CD8-positive, alpha-beta T cell (primary cell): ENCODE measurements at regions of chr2 and their contacts with region 1.

Region 1: GRCh38 chr2:156589381-156590079 is 153.4 kb downstream of the GPD2 start:
- DNase-seq: peak in 6 of 9 experiments; percentile 2 to 67 (median 20)
- ATAC-seq: peak; percentile 63
- H3K4me3 ChIP-seq: no peak overlapping the region
- H3K4me3 Mint-ChIP-seq: no peak overlapping the region
- H3K27ac ChIP-seq: no peak overlapping the region
- H3K27ac Mint-ChIP-seq: no peak overlapping the region
- H3K4me1 ChIP-seq: no peaks in the 10 kb centered on the region
- H3K4me1 Mint-ChIP-seq: peaks cover 2% of the 10 kb centered on the region
- H3K27me3 ChIP-seq: no peaks in the 10 kb centered on the region
- H3K27me3 Mint-ChIP-seq: no peaks in the 10 kb centered on the region
- CTCF ChIP-seq: peak; percentile 87

Region 2: DNA sequence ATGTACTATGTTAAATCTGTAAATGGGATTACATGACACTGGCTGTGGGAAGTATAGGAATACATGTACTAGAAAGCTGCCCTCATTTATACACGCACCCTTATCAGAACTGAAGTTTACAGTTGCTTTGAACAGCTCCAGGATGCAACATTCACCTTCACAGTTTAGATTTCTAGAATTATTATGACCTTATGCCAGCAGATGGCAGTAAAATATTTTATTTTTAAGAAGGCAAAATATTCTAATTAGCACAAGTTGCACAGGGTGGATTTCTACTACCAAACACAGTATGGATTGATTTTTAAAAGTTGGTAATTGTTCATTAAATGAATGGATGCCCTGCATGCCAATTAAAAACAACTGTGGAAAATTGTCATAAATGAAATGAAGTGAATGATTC is 1220.6 kb before region 1 on chr2:
- CTCF ChIA-PET with region 1: interaction called, 5 read pairs
- POLR2A ChIA-PET with region 1: no interaction called
- intact Hi-C with region 1: loop called (anchors 2 to 5 kb)
- DNase-seq: peak in 1 of 9 experiments; percentile 4
- ATAC-seq: no peak
- H3K4me3 ChIP-seq: no peak overlapping the region
- H3K4me3 Mint-ChIP-seq: no peak overlapping the region
- H3K27ac ChIP-seq: no peak overlapping the region
- H3K27ac Mint-ChIP-seq: no peak overlapping the region
- H3K4me1 ChIP-seq: no peaks in the 10 kb centered on the region
- H3K4me1 Mint-ChIP-seq: no peaks in the 10 kb centered on the region
- H3K27me3 ChIP-seq: no peaks in the 10 kb centered on the region
- H3K27me3 Mint-ChIP-seq: no peaks in the 10 kb centered on the region
- CTCF ChIP-seq: no peak

Region 3: GRCh38 chr2:156192468-156192867 is 397.1 kb before region 1 on chr2:
- CTCF ChIA-PET with region 1: interaction called, 12 read pairs
- POLR2A ChIA-PET with region 1: no interaction called
- intact Hi-C with region 1: loop called (anchors 1 to 5 kb)
- DNase-seq: peak in 2 of 9 experiments; percentile 17 to 36
- ATAC-seq: no peak
- H3K4me3 ChIP-seq: no peak overlapping the region
- H3K4me3 Mint-ChIP-seq: no peak overlapping the region
- H3K27ac ChIP-seq: no peak overlapping the region
- H3K27ac Mint-ChIP-seq: no peak overlapping the region
- H3K4me1 ChIP-seq: no peaks in the 10 kb centered on the region
- H3K4me1 Mint-ChIP-seq: no peaks in the 10 kb centered on the region
- H3K27me3 ChIP-seq: peaks cover 0 to 1% of the 10 kb centered on the region in 2 experiments
- H3K27me3 Mint-ChIP-seq: no peaks in the 10 kb centered on the region
- CTCF ChIP-seq: peak; percentile 23

Region 4: GRCh38 chr2:156341452-156342253 is 247.9 kb before region 1 on chr2:
- CTCF ChIA-PET with region 1: interaction called, 16 read pairs
- POLR2A ChIA-PET with region 1: interaction called, 5 read pairs
- intact Hi-C with region 1: loop called in 1 of 2 experiments (anchors 1 kb)
- DNase-seq: peak; percentile 73 to 96 (median 87)
- ATAC-seq: peak; percentile 75
- H3K4me3 ChIP-seq: peak overlapping the region; percentile 57 to 91
- H3K4me3 Mint-ChIP-seq: peak overlapping the region; percentile 90
- H3K27ac ChIP-seq: peak overlapping the region; percentile 99
- H3K27ac Mint-ChIP-seq: peak overlapping the region; percentile 98
- H3K4me1 ChIP-seq: peaks cover 19% of the 10 kb centered on the region
- H3K4me1 Mint-ChIP-seq: peaks cover 39% of the 10 kb centered on the region
- H3K27me3 ChIP-seq: no peaks in the 10 kb centered on the region
- H3K27me3 Mint-ChIP-seq: no peaks in the 10 kb centered on the region
- CTCF ChIP-seq: no peak

Region 5: GRCh38 chr2:157952558-157952957 is 1363.0 kb after region 1 on chr2:
- CTCF ChIA-PET with region 1: no interaction called
- POLR2A ChIA-PET with region 1: no interaction called
- intact Hi-C with region 1: no loop called
- DNase-seq: no peak
- ATAC-seq: no peak
- H3K4me3 ChIP-seq: no peak overlapping the region
- H3K4me3 Mint-ChIP-seq: no peak overlapping the region
- H3K27ac ChIP-seq: no peak overlapping the region
- H3K27ac Mint-ChIP-seq: no peak overlapping the region
- H3K4me1 ChIP-seq: no peaks in the 10 kb centered on the region
- H3K4me1 Mint-ChIP-seq: no peaks in the 10 kb centered on the region
- H3K27me3 ChIP-seq: no peaks in the 10 kb centered on the region
- H3K27me3 Mint-ChIP-seq: peaks cover 2% of the 10 kb centered on the region
- CTCF ChIP-seq: no peak